Activated CD8-positive, alpha-beta T cell treated with anti-CD3 and anti-CD28 coated beads, Interleukin-2, amount 10 ng/mL, durations not matched to agents 7 days and 5 days (primary cell): ENCODE measurements at regions of chr14 and their contacts with region 1.

Region 1: GRCh38 chr14:24431569-24432258 is 2.0 kb downstream of the KHNYN start:
- DNase-seq: peak; percentile 95
- ATAC-seq: peak; percentile 71
- H3K4me3 Mint-ChIP-seq: peak overlapping the region; percentile 93
- H3K27ac Mint-ChIP-seq: peak overlapping the region; percentile 96
- H3K4me1 Mint-ChIP-seq: peaks cover 60% of the 10 kb centered on the region
- H3K27me3 Mint-ChIP-seq: no peaks in the 10 kb centered on the region

Region 2: GRCh38 chr14:24241829-24242443 is 189.8 kb before region 1 on chr14:
- CTCF ChIA-PET with region 1: interaction called, 42 read pairs
- POLR2A ChIA-PET with region 1: interaction called, 24 read pairs
- DNase-seq: peak; percentile 95
- ATAC-seq: peak; percentile 85
- H3K4me3 Mint-ChIP-seq: peak overlapping the region; percentile 94
- H3K27ac Mint-ChIP-seq: peak overlapping the region; percentile 100
- H3K4me1 Mint-ChIP-seq: peaks cover 54% of the 10 kb centered on the region
- H3K27me3 Mint-ChIP-seq: no peaks in the 10 kb centered on the region

Region 3: GRCh38 chr14:24258548-24259251 is 173.0 kb before region 1 on chr14:
- CTCF ChIA-PET with region 1: no interaction called
- POLR2A ChIA-PET with region 1: no interaction called
- DNase-seq: no peak
- ATAC-seq: no peak
- H3K4me3 Mint-ChIP-seq: no peak overlapping the region
- H3K27ac Mint-ChIP-seq: no peak overlapping the region
- H3K4me1 Mint-ChIP-seq: no peaks in the 10 kb centered on the region
- H3K27me3 Mint-ChIP-seq: no peaks in the 10 kb centered on the region

Region 4: DNA sequence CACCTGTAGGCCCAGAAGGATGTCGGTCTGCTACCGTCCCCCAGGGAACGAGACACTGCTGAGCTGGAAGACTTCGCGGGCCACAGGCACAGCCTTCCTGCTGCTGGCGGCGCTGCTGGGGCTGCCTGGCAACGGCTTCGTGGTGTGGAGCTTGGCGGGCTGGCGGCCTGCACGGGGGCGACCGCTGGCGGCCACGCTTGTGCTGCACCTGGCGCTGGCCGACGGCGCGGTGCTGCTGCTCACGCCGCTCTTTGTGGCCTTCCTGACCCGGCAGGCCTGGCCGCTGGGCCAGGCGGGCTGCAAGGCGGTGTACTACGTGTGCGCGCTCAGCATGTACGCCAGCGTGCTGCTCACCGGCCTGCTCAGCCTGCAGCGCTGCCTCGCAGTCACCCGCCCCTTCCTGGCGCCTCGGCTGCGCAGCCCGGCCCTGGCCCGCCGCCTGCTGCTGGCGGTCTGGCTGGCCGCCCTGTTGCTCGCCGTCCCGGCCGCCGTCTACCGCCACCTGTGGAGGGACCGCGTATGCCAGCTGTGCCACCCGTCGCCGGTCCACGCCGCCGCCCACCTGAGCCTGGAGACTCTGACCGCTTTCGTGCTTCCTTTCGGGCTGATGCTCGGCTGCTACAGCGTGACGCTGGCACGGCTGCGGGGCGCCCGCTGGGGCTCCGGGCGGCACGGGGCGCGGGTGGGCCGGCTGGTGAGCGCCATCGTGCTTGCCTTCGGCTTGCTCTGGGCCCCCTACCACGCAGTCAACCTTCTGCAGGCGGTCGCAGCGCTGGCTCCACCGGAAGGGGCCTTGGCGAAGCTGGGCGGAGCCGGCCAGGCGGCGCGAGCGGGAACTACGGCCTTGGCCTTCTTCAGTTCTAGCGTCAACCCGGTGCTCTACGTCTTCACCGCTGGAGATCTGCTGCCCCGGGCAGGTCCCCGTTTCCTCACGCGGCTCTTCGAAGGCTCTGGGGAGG is 120.8 kb before region 1 on chr14 and contains the start of gene LTB4R:
- CTCF ChIA-PET with region 1: interaction called, 94 read pairs
- POLR2A ChIA-PET with region 1: interaction called, 23 read pairs
- DNase-seq: peak; percentile 77
- ATAC-seq: peak; percentile 89
- H3K4me3 Mint-ChIP-seq: peak within 1 kb of the TSS; percentile 72
- H3K27ac Mint-ChIP-seq: peak within 1 kb of the TSS; percentile 94
- H3K4me1 Mint-ChIP-seq: peaks cover 84% of the 10 kb centered on the region
- H3K27me3 Mint-ChIP-seq: no peaks in the 10 kb centered on the region
- total RNA-seq, gene LTB4R: 26.9 to 28.0 TPM

Region 5: DNA sequence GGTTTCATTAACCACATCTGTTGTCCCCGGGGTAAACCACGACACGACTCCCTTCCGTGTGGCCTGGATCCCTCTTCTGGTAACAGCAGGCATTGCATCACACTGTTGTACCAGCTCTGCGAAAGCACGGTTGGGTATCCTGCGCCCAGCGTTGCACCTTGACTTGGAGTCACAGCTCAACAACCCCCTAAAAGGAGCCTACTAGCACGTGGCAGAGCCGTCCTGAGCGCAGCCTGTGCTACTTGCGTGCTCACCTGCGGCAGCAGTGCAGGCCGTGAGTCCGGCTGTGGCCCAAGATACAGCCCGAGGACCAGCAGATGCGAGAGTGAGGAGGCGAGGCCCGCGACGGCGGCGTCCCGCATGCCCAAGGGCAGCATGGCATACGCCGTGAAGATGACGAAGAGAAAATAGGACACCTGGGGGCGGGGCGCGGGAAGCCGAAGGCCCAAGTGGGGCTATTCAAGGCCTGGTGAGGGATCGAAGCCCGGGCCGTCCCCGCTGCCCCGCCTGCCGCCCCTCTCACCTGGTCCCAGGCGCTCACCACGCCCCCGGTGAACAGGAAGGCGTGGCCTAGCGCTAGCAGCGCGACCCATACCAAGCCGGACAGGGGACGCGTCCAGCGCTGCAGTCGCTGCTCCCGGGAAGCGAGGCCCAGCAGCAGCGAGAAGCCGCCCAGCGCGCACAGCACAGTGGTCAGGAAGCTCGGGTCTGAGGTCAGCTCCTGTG is 99.3 kb before region 1 on chr14:
- CTCF ChIA-PET with region 1: interaction called, 709 read pairs
- POLR2A ChIA-PET with region 1: interaction called, 185 read pairs
- DNase-seq: peak; percentile 94
- ATAC-seq: peak; percentile 79
- H3K4me3 Mint-ChIP-seq: peak overlapping the region; percentile 75
- H3K27ac Mint-ChIP-seq: peak overlapping the region; percentile 61
- H3K4me1 Mint-ChIP-seq: peaks cover 73% of the 10 kb centered on the region
- H3K27me3 Mint-ChIP-seq: peaks cover 22% of the 10 kb centered on the region

Region 6: GRCh38 chr14:24372701-24373416 is 58.9 kb before region 1 on chr14:
- CTCF ChIA-PET with region 1: interaction called, 23 read pairs
- POLR2A ChIA-PET with region 1: interaction called, 11 read pairs
- DNase-seq: no peak
- ATAC-seq: no peak
- H3K4me3 Mint-ChIP-seq: no peak overlapping the region
- H3K27ac Mint-ChIP-seq: no peak overlapping the region
- H3K4me1 Mint-ChIP-seq: peaks cover 14% of the 10 kb centered on the region
- H3K27me3 Mint-ChIP-seq: peaks cover 21% of the 10 kb centered on the region

Region 7: DNA sequence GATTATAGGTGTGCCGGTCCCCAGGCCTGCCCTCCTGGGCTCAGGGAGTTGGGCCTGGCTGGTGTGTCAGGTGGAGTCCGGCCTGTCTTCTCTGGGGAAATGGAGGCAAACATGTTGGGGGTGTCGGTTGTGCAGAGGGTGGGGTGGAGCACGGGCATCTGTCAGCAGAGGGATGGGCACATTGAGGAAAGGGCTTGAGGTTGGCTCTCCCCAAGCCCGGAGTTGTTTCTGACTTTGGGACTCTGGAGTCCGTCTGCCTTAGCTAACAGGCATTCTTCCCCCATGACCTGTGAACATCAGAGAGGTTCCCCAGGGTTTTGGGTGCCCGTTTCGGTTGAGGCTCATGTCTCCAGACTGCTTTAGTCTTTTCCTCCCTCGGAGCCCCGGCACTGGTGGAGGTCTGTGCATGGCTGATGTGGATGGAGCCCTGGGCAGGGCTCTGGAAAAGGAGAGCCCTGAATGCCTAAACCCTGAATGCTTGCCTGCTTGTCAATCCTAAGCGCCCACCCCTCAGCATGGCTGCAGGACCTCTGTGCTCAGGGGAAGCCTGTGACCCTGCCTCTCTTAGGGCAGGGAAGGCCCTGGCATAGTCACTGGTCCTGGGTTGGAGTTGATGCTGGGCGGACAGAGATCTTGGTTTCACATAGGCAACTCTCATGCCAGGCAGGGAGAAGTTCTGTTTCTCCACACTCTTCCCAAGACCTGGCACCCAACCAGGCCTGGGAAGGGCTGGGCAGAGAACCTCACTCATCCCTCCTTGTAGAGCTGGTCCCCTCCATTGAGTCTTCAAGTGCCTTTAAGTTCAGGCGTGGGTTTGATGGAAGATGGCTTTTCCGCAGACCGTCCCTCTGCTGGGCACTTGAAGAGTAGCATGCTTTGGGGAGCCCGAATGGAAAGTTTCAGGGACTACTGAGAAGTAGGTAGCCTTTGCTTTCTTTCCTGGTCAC is 20.0 kb before region 1 on chr14:
- CTCF ChIA-PET with region 1: interaction called, 18 read pairs
- POLR2A ChIA-PET with region 1: interaction called, 10 read pairs
- DNase-seq: peak; percentile 47
- ATAC-seq: peak; percentile 73
- H3K4me3 Mint-ChIP-seq: no peak overlapping the region
- H3K27ac Mint-ChIP-seq: no peak overlapping the region
- H3K4me1 Mint-ChIP-seq: no peaks in the 10 kb centered on the region
- H3K27me3 Mint-ChIP-seq: no peaks in the 10 kb centered on the region

Region 8: GRCh38 chr14:24463017-24463883 is 31.5 kb after region 1 on chr14:
- CTCF ChIA-PET with region 1: no interaction called
- POLR2A ChIA-PET with region 1: no interaction called
- DNase-seq: no peak
- ATAC-seq: no peak
- H3K4me3 Mint-ChIP-seq: no peak overlapping the region
- H3K27ac Mint-ChIP-seq: no peak overlapping the region
- H3K4me1 Mint-ChIP-seq: peaks cover 8% of the 10 kb centered on the region
- H3K27me3 Mint-ChIP-seq: peaks cover 4% of the 10 kb centered on the region

Region 9: DNA sequence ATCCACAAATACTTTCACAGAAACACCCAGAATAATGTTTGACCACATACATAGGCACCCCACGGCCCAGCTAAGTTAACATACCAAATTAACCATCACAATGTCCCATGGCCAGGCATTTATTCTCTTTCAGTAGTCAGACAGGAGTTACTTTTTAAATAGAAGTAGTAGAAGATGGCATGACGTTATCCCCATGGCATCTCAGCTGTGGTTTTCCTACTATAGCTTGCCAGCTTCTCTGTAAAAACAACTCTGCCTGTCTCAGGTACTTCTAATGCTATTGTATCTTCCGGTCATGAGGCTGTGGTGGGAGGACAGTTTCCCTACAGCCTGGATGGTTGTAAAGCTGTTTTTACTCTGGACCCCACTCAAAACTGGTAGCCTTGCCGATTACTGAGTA is 125.0 kb after region 1 on chr14:
- CTCF ChIA-PET with region 1: no interaction called
- POLR2A ChIA-PET with region 1: no interaction called
- DNase-seq: no peak
- ATAC-seq: no peak
- H3K4me3 Mint-ChIP-seq: no peak overlapping the region
- H3K27ac Mint-ChIP-seq: no peak overlapping the region
- H3K4me1 Mint-ChIP-seq: no peaks in the 10 kb centered on the region
- H3K27me3 Mint-ChIP-seq: peaks cover 12% of the 10 kb centered on the region

Region 10: DNA sequence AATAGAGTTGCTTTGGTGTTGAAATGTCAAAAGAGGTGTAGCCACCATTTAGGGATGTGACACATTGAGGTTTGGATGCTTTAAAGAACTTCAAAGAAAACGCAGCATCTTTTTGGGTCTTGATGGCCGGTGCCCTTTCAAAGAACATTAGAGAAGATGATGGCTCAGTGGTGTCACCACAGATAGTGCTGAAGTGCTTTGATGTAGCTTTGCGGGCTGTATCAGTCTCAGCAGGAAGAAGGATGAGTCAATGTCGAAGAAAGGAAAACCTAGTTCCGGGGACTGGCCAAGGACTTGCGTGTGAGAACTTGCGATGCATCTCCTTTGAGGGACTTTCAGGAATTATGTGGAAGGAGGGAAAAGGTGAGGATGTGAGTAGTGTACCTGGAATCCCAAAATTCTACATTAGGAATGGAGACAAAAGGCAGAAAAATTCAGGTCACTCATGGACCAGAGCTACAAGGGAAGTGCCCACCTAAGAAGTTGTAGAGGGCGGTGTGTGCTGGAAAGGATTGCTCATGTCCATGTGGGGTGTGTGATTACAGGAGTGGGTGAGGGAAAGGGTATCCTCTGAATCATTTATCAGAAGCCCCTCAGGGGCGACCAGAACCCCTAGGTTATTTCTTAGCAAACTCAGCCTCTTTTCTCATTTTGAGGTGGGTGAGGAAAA is 242.0 kb after region 1 on chr14:
- CTCF ChIA-PET with region 1: interaction called, 4 read pairs
- POLR2A ChIA-PET with region 1: interaction called, 12 read pairs
- DNase-seq: peak; percentile 91
- ATAC-seq: peak; percentile 84
- H3K4me3 Mint-ChIP-seq: peak overlapping the region; percentile 75
- H3K27ac Mint-ChIP-seq: peak overlapping the region; percentile 99
- H3K4me1 Mint-ChIP-seq: peaks cover 90% of the 10 kb centered on the region
- H3K27me3 Mint-ChIP-seq: no peaks in the 10 kb centered on the region

Region 11: GRCh38 chr14:25252793-25253192 is 821.1 kb after region 1 on chr14:
- CTCF ChIA-PET with region 1: no interaction called
- POLR2A ChIA-PET with region 1: no interaction called
- DNase-seq: no peak
- ATAC-seq: no peak
- H3K4me3 Mint-ChIP-seq: no peak overlapping the region
- H3K27ac Mint-ChIP-seq: no peak overlapping the region
- H3K4me1 Mint-ChIP-seq: no peaks in the 10 kb centered on the region
- H3K27me3 Mint-ChIP-seq: no peaks in the 10 kb centered on the region